Mammary epithelial cell (primary cell): ENCODE measurements at regions of chr3 and their contacts with region 1.

Region 1: GRCh38 chr3:41961750-41962679 is at the start of gene ULK4:
- DNase-seq: peak; percentile 100
- H3K4me3 ChIP-seq: peak within 1 kb of the TSS; percentile 73 to 82 (median 75)
- H3K27ac ChIP-seq: peak within 1 kb of the TSS; percentile 93
- H3K4me1 ChIP-seq: peaks cover 4% of the 10 kb centered on the region
- H3K27me3 ChIP-seq: no peaks in the 10 kb centered on the region
- CTCF ChIP-seq: no peak
- total RNA-seq, gene ULK4: 5.3 to 9.2 TPM

Region 2: DNA sequence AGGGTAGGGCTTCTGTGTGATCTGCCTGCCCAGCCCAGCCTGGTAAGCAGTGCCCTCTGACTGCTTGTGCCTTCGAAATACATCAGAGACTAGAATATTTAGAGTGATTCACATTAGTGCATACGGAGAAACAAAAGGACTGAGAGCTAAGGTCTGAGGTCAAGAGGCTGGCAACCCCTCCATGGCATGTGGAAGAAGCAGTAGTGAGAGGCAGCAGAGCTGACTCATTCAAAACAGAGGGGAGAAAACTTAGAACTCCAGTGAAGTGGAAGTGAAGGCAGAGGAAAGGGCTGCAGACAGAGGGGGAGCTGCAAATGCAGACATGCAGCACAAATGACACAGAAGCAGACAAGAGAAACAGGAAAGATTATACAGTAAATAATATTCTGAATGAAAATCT is 61.8 kb before region 1 on chr3:
- CTCF ChIA-PET with region 1: no interaction called
- dilution Hi-C with region 1: no loop called
- in situ Hi-C with region 1: no loop called
- intact Hi-C with region 1: loop called (anchors 5 kb)
- DNase-seq: no peak
- H3K4me3 ChIP-seq: no peak overlapping the region
- H3K27ac ChIP-seq: no peak overlapping the region
- H3K4me1 ChIP-seq: no peaks in the 10 kb centered on the region
- H3K27me3 ChIP-seq: no peaks in the 10 kb centered on the region
- CTCF ChIP-seq: no peak

Region 3: DNA sequence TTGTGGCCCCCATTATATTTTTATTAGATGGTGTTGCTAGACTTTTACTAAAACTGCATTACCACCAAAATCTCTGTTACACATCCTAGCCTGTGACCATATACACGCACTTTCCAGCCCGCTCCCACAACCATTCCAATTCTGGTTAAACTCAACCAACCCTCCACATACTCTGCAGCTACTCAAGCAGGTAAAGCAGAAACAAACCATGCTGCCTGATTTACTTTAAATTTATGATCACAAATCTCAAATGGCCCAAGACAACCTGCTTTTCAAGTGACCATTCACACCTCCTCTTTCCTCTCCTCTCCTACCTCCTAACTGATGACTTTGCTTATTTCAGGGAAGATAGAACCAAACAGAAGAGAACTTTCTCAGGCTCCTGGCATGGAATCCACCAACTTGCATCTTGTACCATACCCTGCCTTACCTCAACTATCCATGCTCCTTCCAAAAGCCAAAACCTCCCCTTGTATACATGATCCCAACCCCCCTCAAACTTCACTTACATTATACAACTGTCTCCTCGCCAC is 18.6 kb before region 1 on chr3:
- CTCF ChIA-PET with region 1: no interaction called
- dilution Hi-C with region 1: no loop called
- in situ Hi-C with region 1: no loop called
- intact Hi-C with region 1: no loop called
- DNase-seq: no peak
- H3K4me3 ChIP-seq: no peak overlapping the region
- H3K27ac ChIP-seq: no peak overlapping the region
- H3K4me1 ChIP-seq: no peaks in the 10 kb centered on the region
- H3K27me3 ChIP-seq: no peaks in the 10 kb centered on the region
- CTCF ChIP-seq: no peak

Region 4: GRCh38 chr3:41997702-41998550 is 35.9 kb after region 1 on chr3:
- CTCF ChIA-PET with region 1: no interaction called
- dilution Hi-C with region 1: no loop called
- in situ Hi-C with region 1: no loop called
- intact Hi-C with region 1: loop called (anchors 2 kb)
- DNase-seq: no peak
- H3K4me3 ChIP-seq: no peak overlapping the region
- H3K27ac ChIP-seq: no peak overlapping the region
- H3K4me1 ChIP-seq: peaks cover 3% of the 10 kb centered on the region
- H3K27me3 ChIP-seq: no peaks in the 10 kb centered on the region
- CTCF ChIP-seq: peak; percentile 43 to 44

Region 5: DNA sequence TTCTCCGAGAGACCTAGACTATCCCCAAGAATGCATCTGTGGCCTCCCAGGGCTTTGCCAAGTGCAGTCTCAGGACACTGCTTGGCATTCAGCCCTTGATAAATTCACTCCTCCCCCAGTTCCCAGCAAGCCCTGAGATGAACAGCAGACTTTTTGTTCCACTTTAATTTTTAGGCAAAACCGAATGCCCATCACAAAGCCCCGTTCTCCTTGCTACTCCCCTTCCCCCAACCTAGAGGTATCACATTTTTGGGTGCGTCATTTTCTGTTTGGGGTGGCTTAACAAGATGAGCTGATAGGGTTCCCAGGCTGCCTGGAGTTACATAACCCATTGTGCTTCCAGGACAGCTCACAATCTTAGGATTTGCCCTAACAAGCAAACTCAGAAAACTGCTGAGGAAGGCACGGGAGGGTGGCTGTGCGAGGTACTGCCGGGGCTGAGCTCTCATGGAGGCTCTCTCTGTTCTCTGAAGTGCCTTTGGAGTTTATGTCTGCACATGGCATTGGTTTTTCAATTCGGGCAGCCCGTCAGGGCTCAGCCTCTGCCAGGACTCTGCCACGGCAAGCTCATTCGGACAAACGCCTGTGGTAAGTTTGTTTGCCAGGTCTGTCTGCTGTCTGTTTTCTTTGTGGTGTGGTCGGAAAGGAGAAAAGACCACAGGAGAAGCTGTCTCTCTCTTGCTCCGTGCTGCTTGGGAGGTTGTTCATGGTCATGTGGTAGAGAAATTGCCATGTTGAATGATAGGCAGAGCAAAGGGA is 129.1 kb after region 1 on chr3 and contains the start of gene TRAK1:
- CTCF ChIA-PET with region 1: no interaction called
- dilution Hi-C with region 1: no loop called
- in situ Hi-C with region 1: no loop called
- intact Hi-C with region 1: loop called (anchors 1 kb)
- DNase-seq: peak; percentile 95
- H3K4me3 ChIP-seq: peak within 1 kb of the TSS; percentile 37 to 58 (median 54)
- H3K27ac ChIP-seq: peak within 1 kb of the TSS; percentile 79
- H3K4me1 ChIP-seq: peaks cover 17% of the 10 kb centered on the region
- H3K27me3 ChIP-seq: no peaks in the 10 kb centered on the region
- CTCF ChIP-seq: peak in 1 of 2 donors; percentile 20
- total RNA-seq, gene TRAK1: 64.5 to 67.2 TPM

Region 6: DNA sequence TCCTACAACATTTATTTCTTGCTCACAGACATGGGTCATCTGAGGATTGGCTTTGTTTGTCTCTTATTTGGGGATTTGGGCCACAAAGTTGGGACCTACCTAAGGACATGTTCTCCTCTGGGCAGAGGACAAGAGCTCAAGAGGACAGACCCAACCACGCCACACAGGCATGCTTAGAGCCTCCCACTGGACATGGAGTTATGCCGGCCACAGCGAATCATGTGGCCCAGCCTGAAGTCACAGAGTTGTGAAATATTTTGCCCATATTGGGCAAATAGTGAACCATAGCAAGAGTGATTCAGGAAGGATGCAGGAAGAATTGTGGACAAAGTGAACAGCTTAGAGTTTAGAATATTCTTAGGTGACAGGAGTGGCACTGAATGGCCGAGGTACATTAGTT is 139.0 kb after region 1 on chr3:
- CTCF ChIA-PET with region 1: no interaction called
- dilution Hi-C with region 1: no loop called
- in situ Hi-C with region 1: no loop called
- intact Hi-C with region 1: loop called (anchors 1 kb)
- DNase-seq: peak; percentile 72
- H3K4me3 ChIP-seq: no peak overlapping the region
- H3K27ac ChIP-seq: no peak overlapping the region
- H3K4me1 ChIP-seq: peaks cover 37% of the 10 kb centered on the region
- H3K27me3 ChIP-seq: no peaks in the 10 kb centered on the region
- CTCF ChIP-seq: no peak

Region 7: GRCh38 chr3:42526616-42527367 is 564.8 kb after region 1 on chr3:
- CTCF ChIA-PET with region 1: no interaction called
- dilution Hi-C with region 1: no loop called
- in situ Hi-C with region 1: no loop called
- intact Hi-C with region 1: loop called (anchors 10 kb)
- DNase-seq: no peak
- H3K4me3 ChIP-seq: no peak overlapping the region
- H3K27ac ChIP-seq: no peak overlapping the region
- H3K4me1 ChIP-seq: peaks cover 2% of the 10 kb centered on the region
- H3K27me3 ChIP-seq: no peaks in the 10 kb centered on the region
- CTCF ChIP-seq: no peak